Right ventricle myocardium superior (tissue), 1 donor: ENCODE measurements at regions of chr3 and their contacts with region 1.

Region 1: GRCh38 chr3:138694287-138695007 is 85.9 kb downstream of the FAIM start:
- DNase-seq: no peak
- ATAC-seq: no peak

Region 2: DNA sequence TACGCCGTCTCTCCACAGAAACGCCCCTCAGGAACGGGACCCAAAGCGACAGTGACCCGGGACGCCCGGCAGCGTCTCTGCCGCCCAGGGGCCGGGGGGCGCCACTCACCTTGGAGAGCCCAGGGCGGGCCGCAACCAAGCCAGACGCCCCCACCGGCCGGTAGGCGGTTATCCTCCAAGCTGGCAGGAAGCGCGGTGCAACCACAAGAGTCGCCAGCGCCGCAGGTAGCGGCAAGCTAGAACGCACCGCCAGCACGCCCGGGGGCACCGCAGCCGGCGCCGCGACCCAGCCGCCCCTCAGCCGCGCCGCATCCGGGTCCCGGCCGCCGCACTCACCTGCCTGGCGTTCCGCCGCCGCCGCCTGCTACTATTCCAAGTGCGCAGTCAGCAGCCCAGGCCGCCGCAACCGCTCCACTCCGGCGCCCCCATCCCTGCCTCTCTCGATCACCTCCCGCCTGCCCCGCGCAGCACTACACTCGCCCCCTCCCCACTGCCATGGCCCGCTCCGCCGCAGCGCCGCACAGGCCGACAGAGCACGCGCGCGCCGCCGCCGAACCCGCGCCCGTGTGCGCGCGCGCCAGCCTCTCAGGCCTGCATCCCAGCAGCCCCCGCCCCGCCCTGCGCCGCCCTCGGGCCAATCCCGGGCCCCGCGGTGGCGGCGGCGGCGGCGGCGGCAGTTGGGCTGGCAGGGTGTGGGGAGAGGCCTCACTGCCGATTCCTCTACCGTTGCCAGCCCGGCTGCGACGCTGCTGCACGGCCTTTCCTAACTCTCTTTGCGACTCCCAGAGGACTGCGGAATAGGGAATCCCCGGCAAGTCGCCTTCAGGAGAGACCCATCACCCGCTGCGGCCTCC is 140.1 kb after region 1 on chr3 and contains the start of gene PIK3CB:
- intact Hi-C with region 1: loop called (anchors 10 kb)
- DNase-seq: peak; percentile 96
- ATAC-seq: peak; percentile 99
- total RNA-seq, gene PIK3CB: 30.7 TPM